ENCODE measurements at regions of chr11 and their contacts with region 1.

Region 1: DNA sequence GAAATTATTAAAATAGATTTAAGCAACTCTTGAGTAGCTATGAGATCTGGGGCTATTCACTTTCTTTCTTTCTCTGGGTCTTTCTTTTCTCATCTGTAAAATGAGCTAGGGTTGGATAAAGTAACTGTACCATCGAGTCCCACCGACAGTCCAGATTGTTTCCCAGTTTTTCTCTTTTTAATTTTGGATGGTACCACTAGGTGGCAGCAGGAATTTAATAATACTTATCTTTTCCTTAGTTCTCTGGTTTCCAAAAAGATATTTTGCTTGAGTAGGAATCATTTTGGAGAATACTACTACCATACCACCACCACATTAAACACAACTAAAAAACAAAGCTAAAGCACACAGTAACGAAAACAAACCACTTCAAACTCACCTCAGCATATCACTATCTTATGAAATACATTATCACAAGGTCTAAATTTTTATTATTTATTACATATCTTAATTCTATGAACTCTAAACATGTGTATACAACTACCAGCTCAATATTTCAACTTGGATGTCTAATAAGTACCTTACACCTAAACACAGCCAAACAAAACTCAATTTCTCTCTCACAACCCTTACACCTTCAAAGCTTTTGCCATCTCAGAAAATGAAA is 584.0 kb downstream of the KCNA4 start:
- DNase-seq: no peak
- ATAC-seq: no peak
- H3K4me3 ChIP-seq: no peak overlapping the region
- H3K27ac ChIP-seq: no peak overlapping the region
- H3K4me1 ChIP-seq: no peaks in the 10 kb centered on the region
- H3K27me3 ChIP-seq: no peaks in the 10 kb centered on the region
- CTCF ChIP-seq: peak; percentile 15 to 41 (median 32)

Region 2: GRCh38 chr11:30917859-30918478 is 1485.1 kb after region 1 on chr11:
- intact Hi-C with region 1: loop called in 1 of 3 experiments (anchors 10 kb)
- DNase-seq: no peak
- ATAC-seq: peak in 3 of 4 donors; percentile 74 to 77 (median 74)
- H3K4me3 ChIP-seq: no peak overlapping the region
- H3K27ac ChIP-seq: no peak overlapping the region
- H3K4me1 ChIP-seq: no peaks in the 10 kb centered on the region
- H3K27me3 ChIP-seq: peaks cover 0 to 5% (median 0%) of the 10 kb centered on the region in 4 donors
- CTCF ChIP-seq: peak in 3 of 4 donors; percentile 55 to 68 (median 60)

Measured in pancreas (tissue), 10 donors.